ENCODE measurements at regions of chr19 and their contacts with region 1.

Region 1: GRCh38 chr19:51593969-51594773 is 23.1 kb downstream of the ZNF175 start:
- DNase-seq: peak; percentile 91 to 99
- H3K4me3 ChIP-seq: peak overlapping the region; percentile 71 to 84
- H3K27ac ChIP-seq: peak overlapping the region in 1 of 2 donors; percentile 58
- H3K4me1 ChIP-seq: peaks cover 10 to 11% of the 10 kb centered on the region in 2 donors
- H3K27me3 ChIP-seq: no peaks in the 10 kb centered on the region
- CTCF ChIP-seq: no peak

Region 2: GRCh38 chr19:51565583-51565982 is 28.6 kb before region 1 on chr19:
- intact Hi-C with region 1: no loop called
- DNase-seq: no peak
- H3K4me3 ChIP-seq: no peak overlapping the region
- H3K27ac ChIP-seq: no peak overlapping the region
- H3K4me1 ChIP-seq: no peaks in the 10 kb centered on the region
- H3K27me3 ChIP-seq: no peaks in the 10 kb centered on the region
- CTCF ChIP-seq: no peak

Region 3: GRCh38 chr19:51660975-51661600 is 66.9 kb after region 1 on chr19:
- intact Hi-C with region 1: loop called (anchors 2 kb)
- DNase-seq: no peak
- H3K4me3 ChIP-seq: no peak overlapping the region
- H3K27ac ChIP-seq: no peak overlapping the region
- H3K4me1 ChIP-seq: peaks cover 0 to 2% of the 10 kb centered on the region in 2 donors
- H3K27me3 ChIP-seq: no peaks in the 10 kb centered on the region
- CTCF ChIP-seq: peak; percentile 13 to 54 (median 45)